Right cardiac atrium (tissue), 5 donors: ENCODE measurements at regions of chr1 and their contacts with region 1.

Region 1: DNA sequence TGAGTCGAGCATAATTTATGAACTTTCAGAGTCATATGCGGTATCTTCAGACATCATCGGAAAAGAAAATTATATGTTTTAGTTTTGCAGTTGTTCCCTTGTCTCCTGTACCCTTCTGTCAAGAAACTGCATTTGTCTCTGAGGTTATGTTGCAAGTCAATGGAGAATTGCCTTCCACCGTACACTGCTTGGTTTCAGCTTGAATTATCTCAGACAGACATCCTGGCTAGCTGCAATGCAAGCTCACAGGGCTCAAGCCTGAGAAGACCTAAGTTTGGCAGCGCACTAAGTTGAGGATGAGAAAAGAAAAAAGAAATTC is 156.0 kb downstream of the NFIA start:
- DNase-seq: no peak
- ATAC-seq: peak in 1 of 2 donors; percentile 28
- H3K4me3 ChIP-seq: no peak overlapping the region
- H3K27ac ChIP-seq: peak overlapping the region; percentile 38
- H3K4me1 ChIP-seq: peaks cover 6% of the 10 kb centered on the region
- H3K27me3 ChIP-seq: no peaks in the 10 kb centered on the region

Region 2: DNA sequence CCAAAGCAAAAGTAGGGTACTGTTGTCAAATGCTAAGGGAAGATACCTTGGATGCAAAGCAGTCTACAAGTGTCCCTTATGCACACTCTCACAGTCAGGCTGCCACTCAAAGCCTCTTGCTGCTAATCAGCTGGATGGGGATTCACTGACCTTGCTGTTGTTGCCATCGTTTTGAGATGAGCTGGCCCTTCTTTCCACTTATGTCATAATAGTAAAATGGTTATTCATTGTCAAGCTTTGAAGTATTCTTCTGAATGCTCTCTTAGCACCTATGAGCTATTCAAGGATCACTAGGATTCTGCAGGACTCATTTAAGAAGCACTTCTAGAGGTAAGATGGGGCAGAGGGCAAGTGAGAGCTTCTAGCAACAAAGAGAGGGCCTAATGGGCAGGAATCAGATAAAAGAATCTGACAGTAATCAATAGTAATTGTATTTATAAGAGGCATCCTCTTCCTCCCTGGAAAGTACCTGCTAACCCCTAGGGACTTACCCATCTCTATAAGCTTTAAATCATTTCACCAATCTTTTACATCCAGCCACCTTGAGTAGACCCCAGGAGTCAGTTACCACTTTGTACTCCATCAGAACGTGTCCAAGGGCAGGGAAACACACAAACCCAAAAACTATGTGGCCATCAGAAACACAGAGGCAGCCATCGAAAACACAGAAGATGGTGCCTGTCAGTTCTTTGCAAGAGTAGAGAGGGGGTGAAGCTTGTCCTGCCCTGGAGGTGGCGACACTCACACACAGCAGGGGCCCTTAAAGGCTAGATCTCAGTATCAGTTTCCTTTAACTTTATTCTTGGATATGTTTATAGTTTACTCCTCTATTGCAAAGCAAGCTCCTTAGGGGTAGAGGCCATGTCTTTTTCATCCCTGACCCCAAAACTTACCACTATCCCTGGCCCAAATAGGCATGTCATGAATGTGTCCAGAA is 259.6 kb before region 1 on chr1:
- intact Hi-C with region 1: no loop called
- DNase-seq: peak in 1 of 3 donors; percentile 48
- ATAC-seq: peak; percentile 56 to 68
- H3K4me3 ChIP-seq: no peak overlapping the region
- H3K27ac ChIP-seq: no peak overlapping the region
- H3K4me1 ChIP-seq: no peaks in the 10 kb centered on the region
- H3K27me3 ChIP-seq: no peaks in the 10 kb centered on the region

Region 3: GRCh38 chr1:61184040-61184713 is 54.2 kb before region 1 on chr1:
- intact Hi-C with region 1: loop called in 1 of 4 experiments (anchors 10 kb)
- DNase-seq: peak; percentile 95 to 98 (median 97)
- ATAC-seq: peak; percentile 93 to 96
- H3K4me3 ChIP-seq: peak overlapping the region; percentile 72
- H3K27ac ChIP-seq: peak overlapping the region; percentile 97
- H3K4me1 ChIP-seq: peaks cover 15% of the 10 kb centered on the region
- H3K27me3 ChIP-seq: no peaks in the 10 kb centered on the region

Region 4: DNA sequence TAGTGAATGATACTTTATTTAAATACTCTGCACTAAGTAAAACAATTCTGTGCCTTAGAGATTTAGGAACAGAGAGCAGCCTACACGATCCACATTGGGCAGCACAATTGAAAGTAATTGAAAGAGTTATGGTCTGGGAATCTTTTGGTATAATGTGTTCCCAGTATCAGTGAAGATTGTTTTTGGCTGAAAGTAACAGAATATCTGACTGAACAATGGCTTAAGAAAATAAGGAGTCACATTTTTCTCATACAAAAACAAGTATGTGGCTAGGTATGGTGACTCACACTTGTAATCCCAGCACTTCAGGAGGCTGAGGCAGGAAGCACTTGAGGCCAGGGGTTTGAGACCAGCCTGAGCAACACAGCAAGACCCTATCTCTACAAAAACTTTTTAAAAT is 150.2 kb after region 1 on chr1:
- intact Hi-C with region 1: no loop called
- DNase-seq: no peak
- ATAC-seq: peak in 1 of 2 donors; percentile 81
- H3K4me3 ChIP-seq: no peak overlapping the region
- H3K27ac ChIP-seq: no peak overlapping the region
- H3K4me1 ChIP-seq: peaks cover 2% of the 10 kb centered on the region
- H3K27me3 ChIP-seq: no peaks in the 10 kb centered on the region